ENCODE measurements at regions of chr9 and their contacts with region 1.

Region 1: GRCh38 chr9:128723866-128724743 is at the start of gene ZDHHC12:
- DNase-seq: peak; percentile 88
- ATAC-seq: peak; percentile 99
- H3K4me3 ChIP-seq: peak within 1 kb of the TSS; percentile 56
- H3K27ac ChIP-seq: no peak within 1 kb of the TSS; the same call in 1 of the 2 replicates
- H3K4me1 ChIP-seq: peaks cover 4% of the 10 kb centered on the region; the same call in 1 of the 2 replicates
- H3K27me3 ChIP-seq: no peaks in the 10 kb centered on the region
- CTCF ChIP-seq: no peak
- POLR2A ChIP-seq: peak; percentile 21; the same call in 1 of the 2 replicates
- RAD21 ChIP-seq: no peak
- total RNA-seq, gene ZDHHC12: 13.9 and 16.7 TPM in 2 replicates

Region 2: DNA sequence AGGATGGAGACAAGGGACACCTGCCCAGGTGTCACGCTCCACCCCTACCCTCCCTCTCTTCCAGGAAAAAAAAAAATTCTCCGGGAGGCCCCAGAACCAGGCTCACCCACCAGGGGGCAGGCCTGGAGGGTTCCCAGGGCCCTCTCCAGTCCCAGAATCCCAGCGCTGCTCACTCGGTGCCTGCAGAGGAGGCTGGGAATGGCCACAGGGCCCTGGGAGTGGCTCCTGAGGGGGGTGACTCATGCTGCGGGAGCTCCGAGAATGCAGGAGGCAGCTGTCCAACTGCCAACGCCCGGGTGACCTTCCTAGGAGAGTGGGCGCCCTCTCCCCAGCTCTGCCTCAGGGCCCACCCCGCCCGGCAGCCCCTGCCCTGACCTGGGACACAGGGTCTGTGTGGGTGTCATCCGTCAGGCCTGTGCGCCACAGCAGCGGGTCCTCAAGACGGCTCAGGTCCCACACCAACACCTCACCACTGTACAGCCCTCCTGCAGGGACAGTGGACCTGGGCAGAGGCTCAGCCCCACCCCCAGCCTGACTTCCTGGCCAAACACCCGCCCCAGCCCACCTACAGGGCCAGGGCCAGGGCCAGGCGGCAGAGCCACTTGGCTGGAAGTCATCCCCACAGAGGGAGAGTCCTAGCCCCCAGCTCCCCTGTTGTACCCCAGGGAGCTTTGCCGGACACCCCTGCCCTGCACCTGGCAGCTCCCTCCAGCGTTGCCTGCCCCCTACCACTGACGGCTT is 88.7 kb before region 1 on chr9:
- CTCF ChIA-PET with region 1: interaction called, 3 read pairs
- POLR2A ChIA-PET with region 1: no interaction called
- dilution Hi-C with region 1: no loop called
- in situ Hi-C with region 1: no loop called
- intact Hi-C with region 1: loop called (anchors 1 kb)
- DNase-seq: peak; percentile 94
- ATAC-seq: peak; percentile 92
- H3K4me3 ChIP-seq: no peak overlapping the region
- H3K27ac ChIP-seq: peak overlapping the region; percentile 98
- H3K4me1 ChIP-seq: peaks cover 13% of the 10 kb centered on the region
- H3K27me3 ChIP-seq: no peaks in the 10 kb centered on the region
- CTCF ChIP-seq: peak; percentile 90
- POLR2A ChIP-seq: no peak
- RAD21 ChIP-seq: peak; percentile 82